IMR-90 (cell line): ENCODE measurements at regions of chr10 and their contacts with region 1.

Region 1: DNA sequence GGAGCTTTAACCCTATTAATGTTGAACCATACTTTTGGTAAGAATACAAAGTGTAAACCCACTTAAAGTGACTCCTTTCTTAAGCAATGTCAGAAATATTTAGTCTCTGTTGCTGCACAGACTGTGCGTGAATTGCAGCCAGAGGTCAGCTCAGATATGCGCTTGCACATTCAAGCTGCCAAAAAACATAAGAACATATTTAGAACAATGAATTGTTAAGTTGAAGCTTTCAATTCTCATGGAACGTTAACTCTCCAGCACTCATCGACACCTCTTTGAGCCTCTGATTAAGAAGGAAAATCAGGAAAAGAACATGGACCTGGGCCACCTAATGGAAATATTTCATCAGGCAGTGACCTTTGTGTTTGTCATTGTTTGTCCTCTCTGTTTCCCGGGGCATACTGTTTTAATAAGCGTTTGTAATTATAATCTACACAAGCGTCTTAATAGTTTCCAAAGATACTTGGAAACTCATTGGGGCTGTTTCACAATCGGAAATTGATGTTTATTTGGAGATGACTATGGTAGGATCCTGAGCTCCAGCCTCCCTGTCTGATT is 193.0 kb upstream of the CELF2 start:
- DNase-seq: peak; percentile 93
- ATAC-seq: peak; percentile 79
- H3K4me3 ChIP-seq: no peak overlapping the region
- H3K27ac ChIP-seq: peak overlapping the region; percentile 85
- H3K4me1 ChIP-seq: peaks cover 12% of the 10 kb centered on the region
- H3K27me3 ChIP-seq: no peaks in the 10 kb centered on the region
- CTCF ChIP-seq: no peak
- POLR2A ChIP-seq: no peak; the same call in 1 of the 2 replicates
- RAD21 ChIP-seq: 0 out of 2 replicates have a peak, but pooled peaks have one; percentile 6

Region 2: GRCh38 chr10:10786109-10787090 is 38.3 kb before region 1 on chr10:
- CTCF ChIA-PET with region 1: no interaction called
- POLR2A ChIA-PET with region 1: no interaction called
- dilution Hi-C with region 1: no loop called
- in situ Hi-C with region 1: no loop called
- intact Hi-C with region 1: loop called (anchors 5 kb)
- DNase-seq: peak; percentile 67
- ATAC-seq: peak; percentile 12; the same call in 1 of the 2 replicates
- H3K4me3 ChIP-seq: no peak overlapping the region
- H3K27ac ChIP-seq: peak overlapping the region; percentile 77
- H3K4me1 ChIP-seq: peaks cover 8% of the 10 kb centered on the region
- H3K27me3 ChIP-seq: no peaks in the 10 kb centered on the region
- CTCF ChIP-seq: no peak
- POLR2A ChIP-seq: no peak
- RAD21 ChIP-seq: no peak

Region 3: GRCh38 chr10:10872035-10872673 is 47.5 kb after region 1 on chr10:
- CTCF ChIA-PET with region 1: interaction called, 3 read pairs
- POLR2A ChIA-PET with region 1: no interaction called
- dilution Hi-C with region 1: no loop called
- in situ Hi-C with region 1: no loop called
- intact Hi-C with region 1: loop called (anchors 2 kb)
- DNase-seq: peak; percentile 96
- ATAC-seq: peak; percentile 82
- H3K4me3 ChIP-seq: no peak overlapping the region
- H3K27ac ChIP-seq: no peak overlapping the region
- H3K4me1 ChIP-seq: peaks cover 11% of the 10 kb centered on the region; the same call in 1 of the 2 replicates
- H3K27me3 ChIP-seq: no peaks in the 10 kb centered on the region
- CTCF ChIP-seq: no peak
- POLR2A ChIP-seq: no peak; the same call in 1 of the 2 replicates
- RAD21 ChIP-seq: 0 out of 2 replicates have a peak, but pooled peaks have one; percentile 8